Gastrocnemius medialis (tissue), 4 donors: ENCODE measurements at regions of chr7 and their contacts with region 1.

Region 1: DNA sequence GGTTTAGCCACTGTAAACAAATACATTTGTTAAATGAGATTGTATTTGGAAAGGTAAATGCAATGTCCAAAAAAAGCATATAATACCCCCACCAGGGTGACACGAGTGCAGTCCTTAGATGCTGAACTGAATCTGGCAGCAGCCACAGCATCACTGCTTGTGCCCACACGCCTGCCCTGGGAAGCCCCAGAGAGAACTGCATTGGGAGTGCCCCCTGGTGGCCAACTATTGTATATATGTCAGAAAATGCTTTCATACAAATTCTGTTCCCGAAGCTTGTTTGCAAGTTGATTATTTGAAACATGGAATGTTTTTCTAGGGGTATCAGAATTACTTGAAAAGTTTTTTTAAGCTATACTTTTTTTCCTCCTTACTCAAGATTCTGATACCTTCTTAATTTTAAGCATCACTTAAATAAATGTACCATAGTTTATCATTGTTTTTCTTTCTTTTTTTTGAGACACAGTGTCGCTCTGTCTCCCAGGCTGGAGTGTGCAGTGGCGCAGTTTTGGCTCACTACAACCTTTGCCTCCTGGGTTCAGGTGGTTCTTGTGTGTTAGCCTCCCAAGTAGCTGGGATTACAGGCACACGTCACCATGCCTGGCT is 50.1 kb downstream of the LANCL2 start:
- DNase-seq: peak; percentile 53 to 64
- ATAC-seq: peak in 1 of 2 donors; percentile 73
- H3K4me3 ChIP-seq: no peak overlapping the region
- H3K27ac ChIP-seq: no peak overlapping the region
- H3K4me1 ChIP-seq: no peaks in the 10 kb centered on the region
- H3K27me3 ChIP-seq: no peaks in the 10 kb centered on the region
- CTCF ChIP-seq: peak; percentile 66 to 88 (median 78)
- POLR2A ChIP-seq: no peak

Region 2: GRCh38 chr7:54758702-54759592 is 656.3 kb before region 1 on chr7 and contains the start of gene SEC61G:
- in situ Hi-C with region 1: loop called in 2 of 4 experiments (anchors 25 kb)
- intact Hi-C with region 1: no loop called
- DNase-seq: peak; percentile 94 to 95
- ATAC-seq: peak; percentile 97 to 99
- H3K4me3 ChIP-seq: peak within 1 kb of the TSS; percentile 86 to 100 (median 93)
- H3K27ac ChIP-seq: peak within 1 kb of the TSS; percentile 79 to 92 (median 89)
- H3K4me1 ChIP-seq: peaks cover 22 to 23% of the 10 kb centered on the region in 2 donors
- H3K27me3 ChIP-seq: no peaks in the 10 kb centered on the region
- CTCF ChIP-seq: no peak
- POLR2A ChIP-seq: peak; percentile 74 to 85
- total RNA-seq, gene SEC61G: 133 to 292 (median 165) TPM

Region 3: GRCh38 chr7:55260671-55261385 is 154.4 kb before region 1 on chr7:
- in situ Hi-C with region 1: no loop called
- intact Hi-C with region 1: no loop called
- DNase-seq: no peak
- ATAC-seq: no peak
- H3K4me3 ChIP-seq: no peak overlapping the region
- H3K27ac ChIP-seq: no peak overlapping the region
- H3K4me1 ChIP-seq: peaks cover 0 to under 1% of the 10 kb centered on the region in 2 donors
- H3K27me3 ChIP-seq: peaks cover 0 to 2% (median 0%) of the 10 kb centered on the region in 3 donors
- CTCF ChIP-seq: no peak
- POLR2A ChIP-seq: no peak

Region 4: GRCh38 chr7:55271069-55271626 is 144.1 kb before region 1 on chr7:
- in situ Hi-C with region 1: loop called in 2 of 4 experiments (anchors 5 to 10 kb)
- intact Hi-C with region 1: no loop called
- DNase-seq: no peak
- ATAC-seq: no peak
- H3K4me3 ChIP-seq: no peak overlapping the region
- H3K27ac ChIP-seq: no peak overlapping the region
- H3K4me1 ChIP-seq: no peaks in the 10 kb centered on the region
- H3K27me3 ChIP-seq: no peaks in the 10 kb centered on the region
- CTCF ChIP-seq: no peak
- POLR2A ChIP-seq: no peak

Region 5: DNA sequence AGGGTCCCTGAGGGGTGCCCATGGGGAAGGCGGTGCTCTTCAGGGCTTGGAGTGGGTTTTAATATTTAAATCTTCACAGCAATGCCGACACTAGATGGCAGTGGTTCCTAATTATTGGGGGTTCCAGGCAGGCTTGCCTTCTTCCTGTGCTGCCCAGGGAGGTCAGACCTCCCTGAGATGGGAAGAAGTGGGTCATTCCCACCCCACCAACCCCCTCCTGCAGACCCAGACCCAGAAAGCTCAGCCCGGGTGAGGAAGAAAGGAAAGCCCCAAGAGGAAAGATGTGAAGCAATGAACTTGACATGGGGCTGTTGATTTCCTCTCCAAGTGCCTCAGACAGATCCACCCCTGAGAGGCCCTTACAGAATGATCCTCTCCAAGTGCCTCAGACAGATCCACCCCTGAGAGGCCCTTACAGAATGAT is 135.2 kb before region 1 on chr7:
- in situ Hi-C with region 1: loop called (anchors 5 to 10 kb)
- intact Hi-C with region 1: loop called (anchors 1 kb)
- DNase-seq: peak; percentile 17 to 30
- ATAC-seq: peak; percentile 85 to 86
- H3K4me3 ChIP-seq: no peak overlapping the region
- H3K27ac ChIP-seq: no peak overlapping the region
- H3K4me1 ChIP-seq: no peaks in the 10 kb centered on the region
- H3K27me3 ChIP-seq: no peaks in the 10 kb centered on the region
- CTCF ChIP-seq: peak; percentile 51 to 73 (median 66)
- POLR2A ChIP-seq: no peak

Region 6: GRCh38 chr7:55515569-55516279 is 100.4 kb after region 1 on chr7:
- in situ Hi-C with region 1: no loop called
- intact Hi-C with region 1: no loop called
- DNase-seq: peak; percentile 80 to 89
- ATAC-seq: peak; percentile 98 to 99
- H3K4me3 ChIP-seq: no peak overlapping the region
- H3K27ac ChIP-seq: peak overlapping the region; percentile 77 to 86 (median 84)
- H3K4me1 ChIP-seq: peaks cover 36 to 39% of the 10 kb centered on the region in 2 donors
- H3K27me3 ChIP-seq: no peaks in the 10 kb centered on the region
- CTCF ChIP-seq: no peak
- POLR2A ChIP-seq: peak in 1 of 2 donors; percentile 53